ENCODE measurements at regions of chr11 and their contacts with region 1.

Region 1: GRCh38 chr11:44538375-44539054 is 26.9 kb upstream of the CD82 start:
- DNase-seq: peak; percentile 65
- H3K4me3 Mint-ChIP-seq: no peak overlapping the region
- H3K27ac Mint-ChIP-seq: no peak overlapping the region
- H3K4me1 Mint-ChIP-seq: no peaks in the 10 kb centered on the region
- H3K27me3 Mint-ChIP-seq: peaks cover 3% of the 10 kb centered on the region

Region 2: GRCh38 chr11:44110231-44110679 is 428.3 kb before region 1 on chr11:
- intact Hi-C with region 1: loop called (anchors 5 kb)
- DNase-seq: peak; percentile 45
- H3K4me3 Mint-ChIP-seq: no peak overlapping the region
- H3K27ac Mint-ChIP-seq: no peak overlapping the region
- H3K4me1 Mint-ChIP-seq: peaks cover 19% of the 10 kb centered on the region
- H3K27me3 Mint-ChIP-seq: no peaks in the 10 kb centered on the region

Region 3: GRCh38 chr11:44133335-44133946 is 405.1 kb before region 1 on chr11:
- intact Hi-C with region 1: loop called (anchors 1 kb)
- DNase-seq: no peak
- H3K4me3 Mint-ChIP-seq: no peak overlapping the region
- H3K27ac Mint-ChIP-seq: no peak overlapping the region
- H3K4me1 Mint-ChIP-seq: no peaks in the 10 kb centered on the region
- H3K27me3 Mint-ChIP-seq: no peaks in the 10 kb centered on the region

Region 4: DNA sequence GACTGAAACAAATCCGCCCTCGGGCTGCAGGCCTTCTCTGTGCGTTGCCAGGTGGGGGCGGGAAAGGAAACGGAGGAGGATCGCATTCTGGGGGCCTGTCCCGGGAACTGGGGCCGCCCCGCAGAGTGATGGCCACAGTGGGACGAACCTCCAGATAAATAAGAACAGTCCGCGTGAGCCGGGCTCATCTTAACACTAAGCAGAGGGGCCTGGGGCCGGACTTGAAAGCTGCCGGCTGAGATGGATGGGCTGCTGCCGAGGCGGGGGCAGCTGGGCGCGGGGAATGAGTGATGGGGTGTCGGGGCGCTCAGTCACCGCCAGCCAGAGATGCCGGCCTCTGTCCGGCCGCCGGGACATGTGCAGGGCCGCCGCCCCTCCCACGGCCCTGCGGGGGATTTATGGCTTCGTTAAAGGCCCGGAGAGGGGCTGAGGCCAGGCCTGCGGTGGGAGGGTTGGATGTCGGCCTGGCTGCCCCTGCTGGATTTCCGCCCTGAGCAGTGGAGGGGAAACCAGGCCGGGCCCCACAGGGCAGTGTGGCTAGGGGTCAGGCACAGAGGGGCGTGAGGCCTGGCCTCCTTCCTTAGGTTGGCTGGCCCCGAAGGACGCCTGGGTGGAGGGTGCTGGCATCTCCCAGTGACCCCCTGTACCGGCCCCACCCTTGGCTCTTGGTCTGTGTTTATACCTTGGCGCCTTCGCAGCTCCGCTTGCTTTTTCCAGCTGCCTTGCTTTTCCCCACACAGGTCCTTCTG is 18.4 kb before region 1 on chr11:
- intact Hi-C with region 1: loop called (anchors 1 kb)
- DNase-seq: no peak
- H3K4me3 Mint-ChIP-seq: no peak overlapping the region
- H3K27ac Mint-ChIP-seq: no peak overlapping the region
- H3K4me1 Mint-ChIP-seq: peaks cover 4% of the 10 kb centered on the region
- H3K27me3 Mint-ChIP-seq: peaks cover 40% of the 10 kb centered on the region

Measured in activated T-helper 1 cell treated with anti-CD3 and anti-CD28 coated beads, Interleukin-12 subunit alpha, Interleukin-12 subunit beta, Interleukin-2, Interleukin-4 antibody, amounts not matched to agents 30 ng/mL and 10 ng/mL and 1 ng/mL, durations not matched to agents 14 hours and 24 hours and 36 hours (primary cell).